ENCODE measurements at regions of chr12 and their contacts with region 1.

Region 1: GRCh38 chr12:98698603-98699463 is 53.7 kb downstream of the APAF1 start:
- DNase-seq: peak; percentile 6
- H3K4me3 ChIP-seq: no peak overlapping the region
- H3K27me3 ChIP-seq: no peaks in the 10 kb centered on the region
- CTCF ChIP-seq: peak; percentile 74

Region 2: DNA sequence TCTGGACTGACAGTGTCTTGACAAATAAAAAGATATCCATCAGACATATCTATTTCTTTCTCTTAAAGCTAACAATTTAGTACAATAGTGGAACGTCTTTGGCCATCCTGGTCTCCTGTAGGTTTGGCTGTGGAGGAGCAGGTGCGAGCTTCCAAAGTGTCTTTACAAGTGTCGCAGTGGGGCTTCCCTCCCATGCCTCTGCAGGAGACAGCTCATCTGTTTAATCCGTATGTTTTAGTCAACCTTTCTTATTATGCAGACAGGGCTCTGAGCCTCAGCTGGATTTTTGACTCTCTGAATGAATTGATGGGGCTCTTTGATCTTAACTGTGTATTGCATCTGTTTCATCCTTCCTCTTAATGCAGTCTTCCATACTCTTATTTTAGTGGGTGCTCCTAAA is 1178.7 kb before region 1 on chr12:
- CTCF ChIA-PET with region 1: no interaction called
- POLR2A ChIA-PET with region 1: no interaction called
- DNase-seq: no peak
- H3K4me3 ChIP-seq: no peak overlapping the region
- H3K27me3 ChIP-seq: no peaks in the 10 kb centered on the region
- CTCF ChIP-seq: no peak

Region 3: GRCh38 chr12:98998697-98999299 is 300.0 kb after region 1 on chr12:
- CTCF ChIA-PET with region 1: interaction called, 17 read pairs
- POLR2A ChIA-PET with region 1: no interaction called
- DNase-seq: no peak
- H3K4me3 ChIP-seq: no peak overlapping the region
- H3K27me3 ChIP-seq: no peaks in the 10 kb centered on the region
- CTCF ChIP-seq: peak; percentile 58

Region 4: DNA sequence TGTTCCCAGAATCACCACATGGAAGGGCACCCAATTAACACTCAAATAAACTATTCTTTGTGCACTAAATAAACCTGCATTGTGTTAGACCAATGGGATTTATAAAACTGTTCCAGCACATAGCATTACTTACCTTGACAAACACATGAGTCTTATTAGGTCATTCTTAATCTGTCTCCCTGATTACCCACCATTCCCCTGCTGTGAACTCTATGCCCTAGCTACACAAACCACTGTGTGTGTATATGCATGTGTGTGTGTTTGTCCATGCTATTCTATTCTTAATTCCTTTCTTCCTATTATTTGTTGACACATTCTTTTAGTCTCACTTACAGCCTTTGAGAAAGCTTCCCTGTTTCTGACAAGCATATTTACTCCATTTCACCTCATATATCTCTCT is 645.1 kb after region 1 on chr12:
- CTCF ChIA-PET with region 1: no interaction called
- POLR2A ChIA-PET with region 1: no interaction called
- DNase-seq: no peak
- H3K4me3 ChIP-seq: no peak overlapping the region
- H3K27me3 ChIP-seq: no peaks in the 10 kb centered on the region
- CTCF ChIP-seq: no peak